ENCODE measurements at regions of chr3 and their contacts with region 1.

Region 1: DNA sequence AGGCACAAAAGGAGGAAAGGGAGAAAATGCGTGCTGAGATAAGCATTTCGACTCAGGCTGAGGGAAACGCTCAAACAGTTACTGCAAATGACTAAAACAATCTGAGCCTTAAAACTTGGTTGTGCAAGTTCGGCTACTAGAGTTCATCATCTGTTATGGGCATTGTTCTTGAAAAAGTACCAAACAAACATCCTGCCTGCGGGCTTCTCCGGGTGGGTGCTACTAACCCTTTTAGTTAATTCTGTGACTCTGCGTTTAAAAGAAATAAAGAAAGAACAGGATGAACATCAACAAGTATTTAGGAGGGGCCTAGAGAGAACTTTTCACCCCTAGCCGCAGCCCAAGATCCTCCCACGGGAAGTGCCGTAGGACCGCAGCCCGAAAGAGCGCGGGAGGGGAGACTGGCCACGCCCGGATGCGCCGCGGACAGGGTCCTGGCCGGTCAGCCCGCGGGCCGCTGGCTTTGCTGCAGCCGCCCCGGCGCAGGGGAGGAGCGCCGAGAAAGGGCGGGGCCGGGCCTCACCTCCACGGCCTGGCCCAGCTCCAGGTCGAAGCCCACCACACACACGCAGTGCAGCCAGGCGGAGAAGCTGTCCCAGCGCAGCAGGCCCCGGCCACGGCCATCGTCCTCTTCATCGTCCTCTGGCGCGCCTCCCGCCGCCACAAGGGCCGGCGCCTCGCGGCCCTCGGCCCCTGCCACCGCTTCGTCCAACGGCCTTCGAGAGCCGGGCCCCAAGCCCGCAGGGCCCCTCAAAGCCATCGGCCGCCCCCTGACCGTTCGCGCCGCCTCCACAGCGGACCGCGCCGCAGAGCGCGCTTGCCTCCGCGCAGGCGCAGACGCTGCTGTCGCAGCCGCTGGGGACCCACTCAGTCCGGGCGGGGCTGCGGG is at the start of gene DENND6A:
- DNase-seq: peak; percentile 96
- ATAC-seq: peak; percentile 89
- H3K4me3 ChIP-seq: peak within 1 kb of the TSS; percentile 60 to 93 (median 91)
- H3K4me3 Mint-ChIP-seq: peak within 1 kb of the TSS; percentile 91
- H3K27ac ChIP-seq: peak within 1 kb of the TSS; percentile 57 to 80
- H3K27ac Mint-ChIP-seq: peak within 1 kb of the TSS; percentile 90
- H3K4me1 ChIP-seq: peaks cover 23 to 30% of the 10 kb centered on the region in 2 donors
- H3K4me1 Mint-ChIP-seq: peaks cover 37% of the 10 kb centered on the region
- H3K27me3 ChIP-seq: no peaks in the 10 kb centered on the region
- H3K27me3 Mint-ChIP-seq: no peaks in the 10 kb centered on the region
- CTCF ChIP-seq: no peak
- total RNA-seq, gene DENND6A: 31.5 and 37.6 TPM in 2 replicates

Region 2: GRCh38 chr3:56682462-56683121 is 1009.9 kb before region 1 on chr3:
- CTCF ChIA-PET with region 1: no interaction called
- POLR2A ChIA-PET with region 1: no interaction called
- intact Hi-C with region 1: loop called (anchors 5 kb)
- DNase-seq: peak; percentile 91
- ATAC-seq: peak; percentile 69
- H3K4me3 ChIP-seq: peak overlapping the region; percentile 74 to 99 (median 85)
- H3K4me3 Mint-ChIP-seq: peak overlapping the region; percentile 99
- H3K27ac ChIP-seq: peak overlapping the region; percentile 98 to 99
- H3K27ac Mint-ChIP-seq: peak overlapping the region; percentile 99
- H3K4me1 ChIP-seq: peaks cover 16 to 24% of the 10 kb centered on the region in 2 donors
- H3K4me1 Mint-ChIP-seq: peaks cover 42% of the 10 kb centered on the region
- H3K27me3 ChIP-seq: no peaks in the 10 kb centered on the region
- H3K27me3 Mint-ChIP-seq: no peaks in the 10 kb centered on the region
- CTCF ChIP-seq: no peak

Region 3: GRCh38 chr3:57164657-57165573 is 527.6 kb before region 1 on chr3 and contains the start of gene IL17RD:
- CTCF ChIA-PET with region 1: no interaction called
- POLR2A ChIA-PET with region 1: no interaction called
- intact Hi-C with region 1: loop called (anchors 2 kb)
- DNase-seq: peak; percentile 76
- ATAC-seq: peak; percentile 91
- H3K4me3 ChIP-seq: peak within 1 kb of the TSS in 4 of 5 experiments; percentile 37 to 64 (median 58)
- H3K4me3 Mint-ChIP-seq: peak within 1 kb of the TSS; percentile 89
- H3K27ac ChIP-seq: no peak within 1 kb of the TSS
- H3K27ac Mint-ChIP-seq: peak within 1 kb of the TSS; percentile 42
- H3K4me1 ChIP-seq: peaks cover 14 to 20% of the 10 kb centered on the region in 2 donors
- H3K4me1 Mint-ChIP-seq: peaks cover 10% of the 10 kb centered on the region
- H3K27me3 ChIP-seq: peaks cover 0 to 77% (median 34%) of the 10 kb centered on the region in 4 experiments
- H3K27me3 Mint-ChIP-seq: peaks cover 56% of the 10 kb centered on the region
- CTCF ChIP-seq: no peak
- total RNA-seq, gene IL17RD: 0.02 and 0.05 TPM in 2 replicates

Region 4: GRCh38 chr3:57555738-57556458 is 136.6 kb before region 1 on chr3 and contains the start of gene PDE12:
- CTCF ChIA-PET with region 1: no interaction called
- POLR2A ChIA-PET with region 1: interaction called, 3 read pairs
- intact Hi-C with region 1: loop called (anchors 1 kb)
- DNase-seq: peak; percentile 95
- ATAC-seq: peak; percentile 84
- H3K4me3 ChIP-seq: peak within 1 kb of the TSS; percentile 70 to 90 (median 84)
- H3K4me3 Mint-ChIP-seq: peak within 1 kb of the TSS; percentile 88
- H3K27ac ChIP-seq: peak within 1 kb of the TSS; percentile 91 to 100
- H3K27ac Mint-ChIP-seq: peak within 1 kb of the TSS; percentile 100
- H3K4me1 ChIP-seq: peaks cover 14 to 30% of the 10 kb centered on the region in 2 donors
- H3K4me1 Mint-ChIP-seq: peaks cover 36% of the 10 kb centered on the region
- H3K27me3 ChIP-seq: no peaks in the 10 kb centered on the region
- H3K27me3 Mint-ChIP-seq: no peaks in the 10 kb centered on the region
- CTCF ChIP-seq: no peak
- total RNA-seq, gene PDE12: 18.3 and 19.6 TPM in 2 replicates

Region 5: GRCh38 chr3:57675530-57675929 is 17.0 kb before region 1 on chr3:
- CTCF ChIA-PET with region 1: interaction called, 5 read pairs
- POLR2A ChIA-PET with region 1: interaction called, 14 read pairs
- intact Hi-C with region 1: loop called (anchors 1 kb)
- DNase-seq: no peak
- ATAC-seq: no peak
- H3K4me3 ChIP-seq: no peak overlapping the region
- H3K4me3 Mint-ChIP-seq: peak overlapping the region; percentile 38
- H3K27ac ChIP-seq: peak overlapping the region in 1 of 2 donors; percentile 44
- H3K27ac Mint-ChIP-seq: peak overlapping the region; percentile 88
- H3K4me1 ChIP-seq: peaks cover 31 to 35% of the 10 kb centered on the region in 2 donors
- H3K4me1 Mint-ChIP-seq: peaks cover 56% of the 10 kb centered on the region
- H3K27me3 ChIP-seq: no peaks in the 10 kb centered on the region
- H3K27me3 Mint-ChIP-seq: no peaks in the 10 kb centered on the region
- CTCF ChIP-seq: no peak

Region 6: DNA sequence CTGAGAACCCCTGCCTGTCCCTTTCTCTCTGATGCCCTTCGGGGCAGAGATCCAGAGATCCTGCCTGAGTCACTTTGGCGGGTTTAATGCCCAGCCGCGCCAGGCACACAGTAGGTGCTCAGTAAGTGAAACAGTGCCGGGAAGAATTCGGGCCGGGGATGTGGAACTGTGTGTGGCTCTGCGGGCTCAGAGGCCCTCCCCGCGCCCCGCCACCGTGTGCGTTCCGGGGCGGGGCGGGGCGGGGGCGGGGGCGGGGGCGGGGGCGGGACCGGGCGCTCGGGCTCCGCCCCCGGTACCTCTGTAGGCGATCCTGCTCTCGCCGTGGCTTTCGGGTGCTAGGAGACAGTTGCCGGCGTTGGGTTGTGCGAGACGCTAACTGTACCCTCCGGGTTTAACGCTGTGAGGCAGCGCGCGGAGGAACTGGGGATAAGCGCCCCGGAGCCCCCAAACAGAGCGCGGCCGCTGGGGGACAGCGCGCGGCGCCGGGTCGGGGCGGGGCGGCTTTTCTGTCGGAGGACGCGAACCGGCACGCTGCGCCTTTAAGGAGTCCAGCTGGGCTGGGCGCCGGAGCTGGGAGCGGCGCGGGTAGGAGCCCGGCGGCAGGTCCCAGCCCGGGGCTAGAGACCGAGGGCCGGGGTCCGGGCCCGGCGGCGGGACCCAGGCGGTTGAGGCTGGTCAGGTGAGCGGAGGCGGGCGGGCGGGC is 544.9 kb after region 1 on chr3 and contains the start of gene ABHD6:
- CTCF ChIA-PET with region 1: no interaction called
- POLR2A ChIA-PET with region 1: no interaction called
- intact Hi-C with region 1: loop called (anchors 10 kb)
- DNase-seq: peak; percentile 93
- ATAC-seq: peak; percentile 75
- H3K4me3 ChIP-seq: peak within 1 kb of the TSS; percentile 51 to 96 (median 93)
- H3K4me3 Mint-ChIP-seq: peak within 1 kb of the TSS; percentile 97
- H3K27ac ChIP-seq: peak within 1 kb of the TSS; percentile 63 to 86
- H3K27ac Mint-ChIP-seq: peak within 1 kb of the TSS; percentile 94
- H3K4me1 ChIP-seq: peaks cover 41 to 48% of the 10 kb centered on the region in 2 donors
- H3K4me1 Mint-ChIP-seq: peaks cover 70% of the 10 kb centered on the region
- H3K27me3 ChIP-seq: no peaks in the 10 kb centered on the region
- H3K27me3 Mint-ChIP-seq: no peaks in the 10 kb centered on the region
- CTCF ChIP-seq: peak; percentile 15
- total RNA-seq, gene ABHD6: 22.2 and 24.2 TPM in 2 replicates